ENCODE measurements at regions of chr20 and their contacts with region 1.

Region 1: DNA sequence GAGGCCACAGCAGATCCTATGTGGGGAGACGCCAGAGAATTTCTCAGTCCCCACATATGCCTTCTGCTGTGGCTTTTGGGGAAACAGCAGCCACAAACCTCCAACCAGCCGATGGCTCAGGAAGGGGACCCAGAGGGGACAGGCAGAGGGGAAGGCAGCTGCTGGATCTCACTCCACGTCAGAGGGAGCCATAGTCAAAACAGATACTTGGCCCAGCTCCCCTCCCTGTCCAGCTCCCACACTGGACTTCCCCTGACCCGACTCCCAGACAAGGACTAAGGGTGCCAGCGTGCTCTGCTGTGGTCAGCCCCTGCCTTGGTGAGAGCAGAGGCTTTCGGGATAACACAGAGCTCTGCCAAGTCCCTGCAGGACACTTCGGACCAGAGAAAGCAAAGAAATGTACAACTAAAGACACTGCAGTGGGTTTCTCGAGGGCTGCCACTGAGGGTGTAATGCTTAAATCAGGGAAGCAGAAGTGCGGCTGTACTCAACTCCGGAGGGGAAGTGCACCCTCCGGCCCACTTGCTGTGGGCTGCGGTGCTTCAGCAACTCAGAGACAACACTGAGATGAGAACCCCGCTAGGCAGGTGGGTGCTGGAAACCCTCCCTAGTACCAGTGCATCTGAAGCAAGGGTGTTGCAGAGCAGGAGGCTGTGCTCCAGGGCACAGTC is 47.2 kb downstream of the RRBP1 start:
- DNase-seq: no peak
- CTCF ChIP-seq: no peak

Region 2: DNA sequence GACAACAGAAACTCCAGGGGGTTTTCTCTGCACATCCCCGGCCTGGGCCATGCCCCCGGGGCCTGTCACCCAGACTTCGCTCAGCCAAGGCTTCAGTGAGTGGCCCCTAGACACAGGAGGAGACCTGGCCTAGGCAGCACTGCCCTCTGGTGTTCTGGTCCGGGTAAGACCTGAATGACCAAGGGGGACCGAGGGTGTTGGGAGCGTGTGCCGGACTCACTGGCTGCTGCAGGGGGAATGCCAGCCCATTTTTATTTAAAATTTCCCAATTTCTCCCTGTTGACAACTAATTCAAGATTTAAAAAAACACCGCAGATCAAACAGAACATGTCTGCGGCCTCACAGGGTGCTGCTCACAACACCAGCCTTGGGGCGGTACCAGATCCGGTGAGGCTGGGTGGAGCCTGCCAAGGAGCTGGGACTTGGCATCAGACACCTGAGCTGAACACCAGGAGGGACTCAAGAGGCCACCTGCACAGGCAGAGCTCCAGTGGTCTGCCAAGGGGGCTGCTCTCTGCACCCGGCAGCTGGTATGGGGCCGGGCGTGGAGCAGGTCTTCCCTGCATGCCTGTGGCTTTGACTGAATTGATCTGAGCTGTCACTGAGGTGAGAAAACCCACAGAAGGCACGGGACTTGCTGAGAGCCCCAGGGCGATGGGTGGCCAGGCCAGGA is 17.1 kb before region 1 on chr20:
- CTCF ChIA-PET with region 1: interaction called, 14 read pairs
- POLR2A ChIA-PET with region 1: no interaction called
- DNase-seq: peak; percentile 74
- CTCF ChIP-seq: peak; percentile 48

Region 3: GRCh38 chr20:17648791-17649730 is 14.3 kb after region 1 on chr20:
- CTCF ChIA-PET with region 1: interaction called, 13 read pairs
- POLR2A ChIA-PET with region 1: no interaction called
- DNase-seq: peak; percentile 65
- CTCF ChIP-seq: peak; percentile 42

Measured in GM10248 (cell line).